ENCODE measurements at regions of chr1 and their contacts with region 1.

Region 1: GRCh38 chr1:90721210-90722194 is 4.4 kb upstream of the BARHL2 start:
- DNase-seq: no peak
- ATAC-seq: peak; percentile 89
- H3K4me3 ChIP-seq: no peak overlapping the region
- H3K27ac ChIP-seq: no peak overlapping the region
- H3K4me1 ChIP-seq: no peaks in the 10 kb centered on the region
- H3K27me3 ChIP-seq: peaks cover 11 to 24% of the 10 kb centered on the region in 2 experiments
- CTCF ChIP-seq: peak; percentile 87 to 91 (median 91)
- EP300 ChIP-seq: no peak
- POLR2A ChIP-seq: no peak
- RAD21 ChIP-seq: peak; percentile 72

Region 2: GRCh38 chr1:90133133-90133532 is 588.4 kb before region 1 on chr1:
- CTCF ChIA-PET with region 1: interaction called, 13 read pairs
- POLR2A ChIA-PET with region 1: no interaction called
- RAD21 ChIA-PET with region 1: interaction called, 5 read pairs
- SMC1A ChIA-PET with region 1: interaction called, 11 read pairs
- in situ Hi-C with region 1: no loop called
- intact Hi-C with region 1: no loop called
- DNase-seq: no peak
- ATAC-seq: peak; percentile 92
- H3K4me3 ChIP-seq: no peak overlapping the region
- H3K27ac ChIP-seq: no peak overlapping the region
- H3K4me1 ChIP-seq: no peaks in the 10 kb centered on the region
- H3K27me3 ChIP-seq: no peaks in the 10 kb centered on the region; a peak in 1 of 4 replicates
- CTCF ChIP-seq: peak; percentile 45 to 56 (median 47); a peak in 5 of 6 replicates
- EP300 ChIP-seq: no peak
- POLR2A ChIP-seq: no peak
- RAD21 ChIP-seq: peak; percentile 61

Region 3: DNA sequence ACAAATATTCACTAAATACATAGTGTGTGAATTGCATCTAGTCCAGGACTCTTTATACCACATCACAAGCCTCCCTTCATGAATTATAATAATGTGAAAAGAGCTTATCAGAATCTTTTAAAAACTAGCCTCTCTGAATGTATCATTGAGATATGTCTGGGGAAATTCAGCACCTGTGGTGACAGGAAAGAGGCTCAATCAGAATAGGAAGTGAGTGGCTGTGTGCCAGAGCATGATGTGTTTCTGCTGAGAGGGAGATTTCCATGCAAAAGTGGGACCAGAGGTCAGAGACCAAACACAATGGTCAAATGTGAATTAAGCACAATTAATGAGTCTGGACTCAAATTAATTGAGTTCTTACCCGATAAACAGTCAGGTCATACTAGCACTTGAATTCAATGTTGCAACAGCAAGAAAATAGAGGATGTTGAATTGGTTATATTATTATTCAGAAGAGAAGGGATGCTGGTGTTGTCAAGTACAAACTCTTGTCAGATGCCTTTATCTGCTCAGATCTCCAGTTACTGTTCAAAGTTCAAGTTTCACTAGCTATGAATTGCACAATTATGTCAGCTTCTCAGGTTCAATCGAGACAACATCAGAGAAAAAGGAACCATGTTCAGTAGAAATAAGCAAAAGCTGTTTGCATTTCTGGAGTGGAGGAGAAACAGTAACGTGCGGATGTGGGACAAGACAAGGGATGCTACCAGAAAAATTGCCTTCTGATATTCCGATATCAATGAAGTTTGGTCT is 500.4 kb before region 1 on chr1:
- CTCF ChIA-PET with region 1: no interaction called
- POLR2A ChIA-PET with region 1: no interaction called
- RAD21 ChIA-PET with region 1: no interaction called
- SMC1A ChIA-PET with region 1: no interaction called
- in situ Hi-C with region 1: no loop called
- intact Hi-C with region 1: no loop called
- DNase-seq: no peak
- ATAC-seq: peak; percentile 49
- H3K4me3 ChIP-seq: no peak overlapping the region
- H3K27ac ChIP-seq: no peak overlapping the region
- H3K4me1 ChIP-seq: no peaks in the 10 kb centered on the region
- H3K27me3 ChIP-seq: no peaks in the 10 kb centered on the region
- CTCF ChIP-seq: no peak
- EP300 ChIP-seq: no peak
- POLR2A ChIP-seq: no peak
- RAD21 ChIP-seq: no peak

Region 4: GRCh38 chr1:90526954-90527353 is 194.5 kb before region 1 on chr1:
- CTCF ChIA-PET with region 1: no interaction called
- POLR2A ChIA-PET with region 1: no interaction called
- RAD21 ChIA-PET with region 1: no interaction called
- SMC1A ChIA-PET with region 1: no interaction called
- in situ Hi-C with region 1: no loop called
- intact Hi-C with region 1: no loop called
- DNase-seq: no peak
- ATAC-seq: peak; percentile 57
- H3K4me3 ChIP-seq: no peak overlapping the region
- H3K27ac ChIP-seq: no peak overlapping the region
- H3K4me1 ChIP-seq: no peaks in the 10 kb centered on the region
- H3K27me3 ChIP-seq: no peaks in the 10 kb centered on the region
- CTCF ChIP-seq: no peak
- EP300 ChIP-seq: no peak
- POLR2A ChIP-seq: no peak
- RAD21 ChIP-seq: no peak

Region 5: GRCh38 chr1:90850898-90851710 is 129.6 kb after region 1 on chr1:
- CTCF ChIA-PET with region 1: interaction called, 9 read pairs
- POLR2A ChIA-PET with region 1: no interaction called
- RAD21 ChIA-PET with region 1: interaction called, 3 read pairs
- SMC1A ChIA-PET with region 1: no interaction called
- in situ Hi-C with region 1: no loop called
- intact Hi-C with region 1: loop called (anchors 2 kb)
- DNase-seq: no peak
- ATAC-seq: peak; percentile 99
- H3K4me3 ChIP-seq: peak overlapping the region; percentile 88
- H3K27ac ChIP-seq: no peak overlapping the region
- H3K4me1 ChIP-seq: peaks cover 5% of the 10 kb centered on the region; the same call in 1 of the 2 replicates
- H3K27me3 ChIP-seq: peaks cover 0 to 9% of the 10 kb centered on the region in 2 experiments; a peak in 3 of 4 replicates
- CTCF ChIP-seq: peak; percentile 33 to 70 (median 66); a peak in 4 of 6 replicates
- EP300 ChIP-seq: 0 out of 4 replicates have a peak, but pooled peaks of 1 of the 2 experiments have one; percentile 10
- POLR2A ChIP-seq: 0 out of 2 replicates have a peak, but pooled peaks have one; percentile 25
- RAD21 ChIP-seq: 0 out of 2 replicates have a peak, but pooled peaks have one; percentile 25

Region 6: GRCh38 chr1:91021686-91022517 is 300.4 kb after region 1 on chr1 and contains the start of gene ZNF644:
- CTCF ChIA-PET with region 1: interaction called, 10 read pairs
- POLR2A ChIA-PET with region 1: no interaction called
- RAD21 ChIA-PET with region 1: interaction called, 14 read pairs
- SMC1A ChIA-PET with region 1: interaction called, 3 read pairs
- in situ Hi-C with region 1: no loop called
- intact Hi-C with region 1: no loop called
- DNase-seq: peak; percentile 89
- ATAC-seq: peak; percentile 84
- H3K4me3 ChIP-seq: peak within 1 kb of the TSS; percentile 70
- H3K27ac ChIP-seq: peak within 1 kb of the TSS; percentile 97
- H3K4me1 ChIP-seq: peaks cover 12% of the 10 kb centered on the region
- H3K27me3 ChIP-seq: no peaks in the 10 kb centered on the region
- CTCF ChIP-seq: no peak
- EP300 ChIP-seq: peak in 1 of 2 experiments; percentile 18; a peak in 2 of 4 replicates
- POLR2A ChIP-seq: peak; percentile 90
- RAD21 ChIP-seq: no peak
- polyA plus RNA-seq, gene ZNF644: 28.1 to 34.4 TPM

Measured in GM12878 (cell line).